HEK293 (cell line): ENCODE measurements at regions of chr19 and their contacts with region 1.

Region 1: DNA sequence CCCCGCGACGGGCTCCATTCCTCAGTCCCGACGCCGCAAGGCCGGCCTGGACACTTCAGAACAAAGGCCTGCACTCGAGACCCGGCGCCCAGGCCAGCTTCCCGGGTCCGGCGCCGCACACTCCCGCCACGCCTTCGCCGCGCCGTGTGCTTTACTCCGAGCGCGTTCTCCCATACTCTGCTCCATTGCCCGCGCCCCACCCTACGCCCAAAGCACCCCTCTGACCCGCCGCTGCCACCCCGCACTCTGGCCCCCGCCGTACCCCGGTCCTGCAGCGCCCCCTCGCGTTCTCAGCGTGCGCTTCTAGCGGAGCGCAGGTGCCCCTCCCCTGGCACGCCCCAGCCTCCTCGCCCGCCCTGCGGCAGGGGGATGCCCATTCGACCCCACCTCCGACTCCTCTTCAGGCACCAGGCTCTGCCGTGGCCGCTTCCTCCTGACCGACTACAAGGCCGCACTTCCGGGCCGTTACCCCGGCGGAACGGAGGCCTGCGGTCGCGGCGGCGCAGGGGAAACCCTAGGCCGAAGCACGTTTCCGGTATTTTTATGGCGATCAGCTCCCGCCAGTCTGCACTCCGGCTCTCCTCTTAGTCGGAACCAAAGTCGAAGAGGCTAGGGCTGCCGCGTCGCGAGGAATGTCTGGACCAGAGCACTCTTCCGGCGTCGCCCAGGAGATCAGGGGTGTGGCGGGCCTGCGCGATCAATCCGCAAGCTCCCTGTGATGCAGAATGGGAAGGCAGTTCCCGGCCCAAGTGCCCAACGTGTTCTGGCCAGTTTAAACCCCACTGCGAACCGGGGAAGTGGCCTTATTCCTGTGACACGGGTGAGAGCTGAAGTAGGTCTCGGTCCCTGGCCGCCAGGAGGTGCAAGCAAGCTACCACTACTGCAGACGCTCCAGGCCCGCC is at the start of gene ZBTB45:
- H3K4me3 ChIP-seq: peak within 1 kb of the TSS; percentile 74
- H3K27ac ChIP-seq: peak within 1 kb of the TSS; percentile 94
- H3K4me1 ChIP-seq: peaks cover 10% of the 10 kb centered on the region
- CTCF ChIP-seq: peak; percentile 99

Region 2: DNA sequence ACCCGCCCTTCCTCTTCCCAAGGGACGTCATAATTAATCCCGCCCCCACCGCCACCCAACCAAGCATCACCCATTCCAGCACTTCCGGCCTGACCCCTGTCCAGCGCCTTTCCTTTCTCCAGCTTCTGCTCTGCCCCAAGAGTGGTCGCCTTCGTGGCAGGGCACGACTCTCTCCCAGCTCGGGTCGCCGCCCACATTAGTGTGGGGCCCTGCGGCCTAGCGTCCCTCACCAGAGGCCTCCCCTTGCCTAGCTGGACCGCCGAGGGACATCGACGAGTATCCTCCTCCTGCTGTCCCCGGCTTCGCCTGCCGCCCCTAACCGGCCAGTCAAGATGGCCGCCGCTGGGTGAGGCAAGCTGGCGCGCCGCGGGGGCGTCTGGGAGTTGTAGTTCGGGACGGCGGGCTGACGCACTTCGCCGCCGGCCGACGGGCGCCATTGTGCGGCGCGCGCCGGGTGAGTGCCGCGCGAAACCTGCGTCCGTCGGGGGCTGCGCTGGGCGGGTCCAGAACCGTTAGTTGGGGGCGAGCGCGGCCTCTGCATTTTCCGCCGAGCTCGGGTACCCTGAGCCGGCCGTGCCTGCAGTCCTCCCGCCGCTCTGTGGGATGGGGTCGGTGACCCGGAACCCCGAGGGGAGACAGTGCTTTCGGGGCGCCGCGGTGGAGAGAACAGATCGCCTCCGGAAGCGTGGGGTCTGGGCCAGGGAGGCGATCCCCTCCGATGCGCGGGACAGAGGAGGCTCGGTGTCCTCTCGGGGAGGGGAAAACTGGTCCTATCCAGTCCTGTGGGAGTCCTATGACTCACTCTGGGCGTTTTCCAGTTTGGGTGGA is 336.4 kb before region 1 on chr19 and contains the start of gene ZNF274:
- CTCF ChIA-PET with region 1: interaction called, 5 read pairs
- POLR2A ChIA-PET with region 1: interaction called, 12 read pairs
- H3K4me3 ChIP-seq: peak within 1 kb of the TSS; percentile 95
- H3K27ac ChIP-seq: peak within 1 kb of the TSS; percentile 85
- H3K4me1 ChIP-seq: no peaks in the 10 kb centered on the region
- CTCF ChIP-seq: 0 out of 2 replicates have a peak, but pooled peaks have one; percentile 24

Region 3: DNA sequence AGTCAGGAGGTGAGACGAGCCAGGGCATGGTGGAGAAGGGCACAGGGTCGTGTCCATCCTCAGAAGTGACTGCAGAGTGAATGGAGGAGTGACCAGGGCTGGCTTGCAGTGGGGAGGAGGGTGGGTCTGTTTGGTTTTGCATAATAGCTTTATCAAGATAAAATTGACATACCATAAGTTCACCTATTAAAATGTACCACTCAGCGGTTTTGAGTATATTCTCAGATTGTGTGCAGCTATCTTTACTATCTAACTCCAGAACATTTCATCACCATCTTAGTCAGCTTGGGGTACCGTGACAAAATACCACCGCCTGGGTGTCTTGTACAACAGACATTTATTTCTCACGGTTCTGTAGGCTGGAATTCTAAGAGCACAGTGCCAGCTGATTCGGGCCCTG is 227.7 kb before region 1 on chr19:
- CTCF ChIA-PET with region 1: no interaction called
- POLR2A ChIA-PET with region 1: no interaction called
- H3K4me3 ChIP-seq: no peak overlapping the region
- H3K27ac ChIP-seq: no peak overlapping the region
- H3K4me1 ChIP-seq: no peaks in the 10 kb centered on the region
- CTCF ChIP-seq: no peak

Region 4: GRCh38 chr19:58326914-58327726 is 192.5 kb before region 1 on chr19 and contains the start of gene ZSCAN22:
- CTCF ChIA-PET with region 1: interaction called, 9 read pairs
- POLR2A ChIA-PET with region 1: interaction called, 21 read pairs
- H3K4me3 ChIP-seq: peak within 1 kb of the TSS; percentile 98
- H3K27ac ChIP-seq: peak within 1 kb of the TSS; percentile 67; the same call in 1 of the 2 replicates
- H3K4me1 ChIP-seq: peaks cover 3% of the 10 kb centered on the region; the same call in 1 of the 2 replicates
- CTCF ChIP-seq: peak; percentile 70

Region 5: GRCh38 chr19:58466760-58467589 is 52.6 kb before region 1 on chr19 and contains the start of gene ZNF324:
- CTCF ChIA-PET with region 1: interaction called, 11 read pairs
- POLR2A ChIA-PET with region 1: interaction called, 10 read pairs
- H3K4me3 ChIP-seq: peak within 1 kb of the TSS; percentile 97
- H3K27ac ChIP-seq: peak within 1 kb of the TSS; percentile 74; the same call in 1 of the 2 replicates
- H3K4me1 ChIP-seq: no peaks in the 10 kb centered on the region; the same call in 1 of the 2 replicates
- CTCF ChIP-seq: peak; percentile 49; the same call in 1 of the 2 replicates

Region 6: DNA sequence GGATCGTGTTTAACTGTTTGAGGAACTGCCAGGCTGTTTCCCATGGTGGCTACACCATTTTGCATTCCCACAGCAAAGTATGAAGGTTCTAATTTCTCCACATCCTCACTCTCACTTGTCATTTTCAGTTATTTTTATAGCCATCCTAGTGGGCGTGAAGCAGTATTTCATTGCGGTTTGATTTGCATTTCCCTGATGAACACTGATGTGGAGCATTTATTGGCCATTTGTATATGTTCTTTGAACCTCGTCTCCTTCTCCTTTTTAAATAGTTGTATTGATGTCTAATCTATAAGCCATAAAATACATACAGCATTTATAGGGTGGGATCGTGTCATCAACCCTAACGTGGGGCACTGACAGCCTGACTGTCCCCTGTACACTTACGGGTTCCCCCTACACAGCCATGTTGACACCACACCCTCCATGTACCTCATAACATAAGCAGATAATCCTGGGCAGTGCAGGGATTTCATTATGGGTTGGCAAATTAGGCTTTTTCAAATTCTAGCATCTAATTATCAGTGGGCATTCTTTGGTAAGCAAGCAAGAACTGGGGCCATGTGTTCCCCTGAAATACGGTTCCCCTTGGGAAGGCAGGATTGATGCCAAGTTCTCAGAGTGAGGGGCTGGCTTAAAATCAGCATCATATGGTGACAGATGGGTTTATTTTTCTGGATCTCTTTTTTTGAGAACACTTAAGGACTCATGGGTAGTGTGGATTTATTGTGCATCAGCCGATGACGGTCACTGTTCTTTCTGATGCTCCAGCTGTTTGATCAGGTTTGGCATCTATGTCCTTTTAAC is 11.6 kb after region 1 on chr19:
- CTCF ChIA-PET with region 1: interaction called, 11 read pairs
- POLR2A ChIA-PET with region 1: interaction called, 4 read pairs
- H3K4me3 ChIP-seq: no peak overlapping the region
- H3K27ac ChIP-seq: no peak overlapping the region
- H3K4me1 ChIP-seq: no peaks in the 10 kb centered on the region
- CTCF ChIP-seq: no peak

Region 7: GRCh38 chr19:58572818-58573657 is 53.4 kb after region 1 on chr19 and contains the start of gene MZF1:
- CTCF ChIA-PET with region 1: interaction called, 5 read pairs
- POLR2A ChIA-PET with region 1: interaction called, 22 read pairs
- H3K4me3 ChIP-seq: peak within 1 kb of the TSS; percentile 67
- H3K27ac ChIP-seq: peak within 1 kb of the TSS; percentile 77
- H3K4me1 ChIP-seq: peaks cover 8% of the 10 kb centered on the region
- CTCF ChIP-seq: peak; percentile 97